ENCODE measurements at regions of chr14 and their contacts with region 1.

Region 1: DNA sequence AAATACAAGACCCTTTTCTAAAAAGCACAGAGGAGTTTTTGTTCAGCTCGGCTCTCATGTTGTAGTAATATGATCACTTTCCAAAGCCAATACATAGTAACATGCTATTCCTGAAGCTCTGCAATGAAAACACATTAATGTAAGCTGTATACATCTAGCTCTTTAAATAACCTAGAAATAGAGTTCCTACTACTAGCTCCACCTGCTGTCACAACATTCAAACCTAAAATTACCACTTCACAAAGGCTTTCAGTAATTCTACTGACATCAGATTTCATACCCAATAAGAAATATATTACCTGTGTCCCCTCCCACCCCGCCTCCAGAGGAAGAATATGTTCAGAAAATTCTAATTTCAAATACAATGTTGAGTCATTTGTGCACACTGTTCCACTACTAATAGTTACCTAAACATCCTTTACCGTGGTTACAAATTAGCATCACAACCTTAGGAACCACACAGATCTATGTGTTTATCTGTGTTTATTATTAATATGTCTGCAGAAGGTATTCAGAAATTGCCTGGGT is 17.8 kb downstream of the EFCAB11 start:
- DNase-seq: no peak
- ATAC-seq: no peak
- H3K4me3 Mint-ChIP-seq: no peak overlapping the region
- H3K27ac Mint-ChIP-seq: no peak overlapping the region
- H3K4me1 Mint-ChIP-seq: peaks cover under 1% of the 10 kb centered on the region
- H3K27me3 Mint-ChIP-seq: no peaks in the 10 kb centered on the region
- CTCF ChIP-seq: no peak

Region 2: GRCh38 chr14:89870316-89870715 is 66.4 kb before region 1 on chr14:
- CTCF ChIA-PET with region 1: no interaction called
- POLR2A ChIA-PET with region 1: no interaction called
- intact Hi-C with region 1: no loop called
- DNase-seq: no peak
- ATAC-seq: no peak
- H3K4me3 Mint-ChIP-seq: no peak overlapping the region
- H3K27ac Mint-ChIP-seq: no peak overlapping the region
- H3K4me1 Mint-ChIP-seq: no peaks in the 10 kb centered on the region
- H3K27me3 Mint-ChIP-seq: no peaks in the 10 kb centered on the region
- CTCF ChIP-seq: no peak

Region 3: GRCh38 chr14:89922031-89922907 is 14.5 kb before region 1 on chr14:
- CTCF ChIA-PET with region 1: interaction called, 13 read pairs
- POLR2A ChIA-PET with region 1: no interaction called
- intact Hi-C with region 1: no loop called
- DNase-seq: no peak
- ATAC-seq: no peak
- H3K4me3 Mint-ChIP-seq: no peak overlapping the region
- H3K27ac Mint-ChIP-seq: no peak overlapping the region
- H3K4me1 Mint-ChIP-seq: peaks cover 2% of the 10 kb centered on the region
- H3K27me3 Mint-ChIP-seq: no peaks in the 10 kb centered on the region
- CTCF ChIP-seq: no peak

Region 4: DNA sequence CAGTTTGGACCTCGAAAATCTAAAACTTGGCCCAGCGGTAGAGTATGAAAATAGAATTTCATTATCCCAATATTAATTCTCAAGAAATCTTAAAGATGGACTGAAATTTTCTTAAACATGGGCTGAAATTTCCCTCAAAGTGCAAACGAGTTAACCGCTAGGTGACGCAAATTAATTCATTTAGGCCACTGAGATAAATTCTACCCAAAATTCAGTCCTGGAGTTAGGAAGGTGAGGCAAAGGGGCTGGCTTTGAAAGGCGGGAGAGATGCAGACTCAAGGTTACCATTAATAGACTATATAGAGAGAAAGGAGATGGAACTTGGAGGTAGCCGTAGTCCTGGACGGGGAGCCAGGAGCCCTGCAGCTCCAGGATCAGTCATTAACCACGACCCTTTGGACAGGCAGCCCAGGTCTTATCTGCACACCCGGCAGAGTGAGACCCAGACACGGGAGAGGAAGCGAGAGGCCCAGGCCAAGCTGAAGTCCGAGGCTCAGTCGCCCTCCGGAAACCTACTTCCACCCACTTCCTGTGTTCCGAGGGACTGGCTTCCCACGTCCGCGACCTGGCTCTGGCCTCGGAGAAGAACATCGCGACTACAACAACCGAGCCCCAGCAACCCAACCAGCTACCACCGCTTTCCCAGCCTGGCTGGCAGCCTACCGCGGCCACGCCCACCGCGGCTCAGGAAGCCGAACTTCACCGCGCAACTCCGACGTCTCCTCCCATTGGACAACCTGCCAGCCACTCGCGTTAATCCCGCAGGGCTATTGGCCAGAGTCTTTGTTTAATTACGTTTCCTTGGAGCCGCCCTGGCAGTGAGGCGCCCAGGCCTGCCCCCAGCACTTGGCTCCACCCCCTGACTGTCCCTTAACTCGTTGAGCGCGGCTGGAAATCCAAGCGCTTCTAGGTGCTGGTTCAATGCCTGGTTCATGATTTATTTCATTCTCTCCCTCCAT is 17.6 kb after region 1 on chr14 and contains the start of gene EFCAB11:
- CTCF ChIA-PET with region 1: interaction called, 28 read pairs
- POLR2A ChIA-PET with region 1: no interaction called
- intact Hi-C with region 1: no loop called
- DNase-seq: peak; percentile 97
- ATAC-seq: peak; percentile 86
- H3K4me3 Mint-ChIP-seq: peak within 1 kb of the TSS; percentile 92
- H3K27ac Mint-ChIP-seq: peak within 1 kb of the TSS; percentile 92
- H3K4me1 Mint-ChIP-seq: peaks cover 31% of the 10 kb centered on the region
- H3K27me3 Mint-ChIP-seq: no peaks in the 10 kb centered on the region
- CTCF ChIP-seq: no peak
- total RNA-seq, gene EFCAB11: 6.6 to 8.4 TPM

Region 5: GRCh38 chr14:89959853-89960445 is 23.2 kb after region 1 on chr14:
- CTCF ChIA-PET with region 1: interaction called, 28 read pairs
- POLR2A ChIA-PET with region 1: no interaction called
- intact Hi-C with region 1: no loop called
- DNase-seq: no peak
- ATAC-seq: peak; percentile 31
- H3K4me3 Mint-ChIP-seq: peak overlapping the region; percentile 55
- H3K27ac Mint-ChIP-seq: peak overlapping the region; percentile 81
- H3K4me1 Mint-ChIP-seq: peaks cover 70% of the 10 kb centered on the region
- H3K27me3 Mint-ChIP-seq: no peaks in the 10 kb centered on the region
- CTCF ChIP-seq: no peak

Region 6: GRCh38 chr14:90003908-90004307 is 67.2 kb after region 1 on chr14:
- CTCF ChIA-PET with region 1: interaction called, 11 read pairs
- POLR2A ChIA-PET with region 1: no interaction called
- intact Hi-C with region 1: no loop called
- DNase-seq: no peak
- ATAC-seq: peak; percentile 56
- H3K4me3 Mint-ChIP-seq: no peak overlapping the region
- H3K27ac Mint-ChIP-seq: peak overlapping the region; percentile 15
- H3K4me1 Mint-ChIP-seq: peaks cover 11% of the 10 kb centered on the region
- H3K27me3 Mint-ChIP-seq: no peaks in the 10 kb centered on the region
- CTCF ChIP-seq: no peak

Region 7: GRCh38 chr14:90235179-90235976 is 298.7 kb after region 1 on chr14:
- CTCF ChIA-PET with region 1: interaction called, 30 read pairs
- POLR2A ChIA-PET with region 1: no interaction called
- intact Hi-C with region 1: loop called (anchors 10 kb)
- DNase-seq: peak; percentile 75
- ATAC-seq: peak; percentile 87
- H3K4me3 Mint-ChIP-seq: no peak overlapping the region
- H3K27ac Mint-ChIP-seq: no peak overlapping the region
- H3K4me1 Mint-ChIP-seq: no peaks in the 10 kb centered on the region
- H3K27me3 Mint-ChIP-seq: peaks cover 10% of the 10 kb centered on the region
- CTCF ChIP-seq: peak; percentile 99

Measured in activated CD8-positive, alpha-beta T cell treated with anti-CD3 and anti-CD28 coated beads for 36 hours (primary cell).